HepG2 (cell line): ENCODE measurements at regions of chr4 and their contacts with region 1.

Region 1: GRCh38 chr4:78951862-78952472 is 12.7 kb upstream of the PAQR3 start:
- DNase-seq: peak; percentile 33
- ATAC-seq: peak; percentile 75
- H3K4me3 ChIP-seq: no peak overlapping the region
- H3K27ac ChIP-seq: no peak overlapping the region
- H3K4me1 ChIP-seq: no peaks in the 10 kb centered on the region
- H3K27me3 ChIP-seq: 0 out of 5 replicates have a peak, but pooled peaks cover 0 to 8% of the 10 kb centered on the region in 2 experiments
- CTCF ChIP-seq: peak; percentile 75
- EP300 ChIP-seq: no peak
- POLR2A ChIP-seq: no peak
- RAD21 ChIP-seq: no peak

Region 2: GRCh38 chr4:79576429-79576753 is 624.4 kb after region 1 on chr4:
- CTCF ChIA-PET with region 1: interaction called, 11 read pairs
- POLR2A ChIA-PET with region 1: no interaction called
- in situ Hi-C with region 1: loop called (anchors 5 kb)
- intact Hi-C with region 1: loop called (anchors 1 kb)
- DNase-seq: peak; percentile 21
- ATAC-seq: peak; percentile 93
- H3K4me3 ChIP-seq: no peak overlapping the region
- H3K27ac ChIP-seq: no peak overlapping the region
- H3K4me1 ChIP-seq: no peaks in the 10 kb centered on the region
- H3K27me3 ChIP-seq: no peaks in the 10 kb centered on the region
- CTCF ChIP-seq: peak; percentile 61
- EP300 ChIP-seq: no peak
- POLR2A ChIP-seq: no peak
- RAD21 ChIP-seq: no peak

Region 3: GRCh38 chr4:80184053-80184790 is 1232.3 kb after region 1 on chr4:
- CTCF ChIA-PET with region 1: interaction called, 3 read pairs
- POLR2A ChIA-PET with region 1: no interaction called
- in situ Hi-C with region 1: no loop called
- intact Hi-C with region 1: loop called (anchors 1 kb)
- DNase-seq: peak; percentile 32
- ATAC-seq: peak; percentile 99
- H3K4me3 ChIP-seq: peak overlapping the region; percentile 45 to 75 (median 53)
- H3K27ac ChIP-seq: no peak overlapping the region
- H3K4me1 ChIP-seq: peaks cover 7% of the 10 kb centered on the region; the same call in 1 of the 2 replicates
- H3K27me3 ChIP-seq: peaks cover 4 to 59% of the 10 kb centered on the region in 2 experiments
- CTCF ChIP-seq: peak; percentile 85
- EP300 ChIP-seq: no peak
- POLR2A ChIP-seq: no peak
- RAD21 ChIP-seq: peak; percentile 75

Region 4: GRCh38 chr4:80215449-80216052 is 1263.6 kb after region 1 on chr4:
- CTCF ChIA-PET with region 1: interaction called, 10 read pairs
- POLR2A ChIA-PET with region 1: no interaction called
- in situ Hi-C with region 1: loop called (anchors 10 kb)
- intact Hi-C with region 1: loop called (anchors 1 kb)
- DNase-seq: peak; percentile 1
- ATAC-seq: no peak
- H3K4me3 ChIP-seq: no peak overlapping the region
- H3K27ac ChIP-seq: no peak overlapping the region
- H3K4me1 ChIP-seq: no peaks in the 10 kb centered on the region
- H3K27me3 ChIP-seq: no peaks in the 10 kb centered on the region
- CTCF ChIP-seq: peak; percentile 54
- EP300 ChIP-seq: no peak
- POLR2A ChIP-seq: no peak
- RAD21 ChIP-seq: no peak

Region 5: GRCh38 chr4:80335554-80336358 is 1383.8 kb after region 1 on chr4 and contains the start of gene CFAP299:
- CTCF ChIA-PET with region 1: interaction called, 5 read pairs
- POLR2A ChIA-PET with region 1: no interaction called
- in situ Hi-C with region 1: no loop called
- intact Hi-C with region 1: loop called (anchors 5 kb)
- DNase-seq: peak; percentile 79
- ATAC-seq: peak; percentile 98
- H3K4me3 ChIP-seq: peak within 1 kb of the TSS; percentile 60 to 77 (median 64)
- H3K27ac ChIP-seq: no peak within 1 kb of the TSS
- H3K4me1 ChIP-seq: peaks cover 9% of the 10 kb centered on the region
- H3K27me3 ChIP-seq: peaks cover 0 to 14% of the 10 kb centered on the region in 2 experiments; a peak in 2 of 5 replicates
- CTCF ChIP-seq: peak; percentile 80
- EP300 ChIP-seq: no peak
- POLR2A ChIP-seq: no peak
- RAD21 ChIP-seq: peak; percentile 28; the same call in 1 of the 2 replicates
- total RNA-seq, gene CFAP299: not detected in 2 replicates